ENCODE measurements at regions of chr17 and their contacts with region 1.

Region 1: GRCh38 chr17:82315703-82316358 is 1.6 kb downstream of the CD7 start:
- DNase-seq: peak; percentile 31
- H3K4me3 Mint-ChIP-seq: peak overlapping the region; percentile 97
- H3K27ac Mint-ChIP-seq: no peak overlapping the region
- H3K4me1 Mint-ChIP-seq: peaks cover 5% of the 10 kb centered on the region
- H3K27me3 Mint-ChIP-seq: no peaks in the 10 kb centered on the region

Region 2: GRCh38 chr17:82305727-82306300 is 10.0 kb before region 1 on chr17:
- intact Hi-C with region 1: loop called (anchors 1 kb)
- DNase-seq: no peak
- H3K4me3 Mint-ChIP-seq: no peak overlapping the region
- H3K27ac Mint-ChIP-seq: peak overlapping the region; percentile 83
- H3K4me1 Mint-ChIP-seq: peaks cover 45% of the 10 kb centered on the region
- H3K27me3 Mint-ChIP-seq: no peaks in the 10 kb centered on the region